Calu3 (cell line): ENCODE measurements at regions of chr21 and their contacts with region 1.

Region 1: DNA sequence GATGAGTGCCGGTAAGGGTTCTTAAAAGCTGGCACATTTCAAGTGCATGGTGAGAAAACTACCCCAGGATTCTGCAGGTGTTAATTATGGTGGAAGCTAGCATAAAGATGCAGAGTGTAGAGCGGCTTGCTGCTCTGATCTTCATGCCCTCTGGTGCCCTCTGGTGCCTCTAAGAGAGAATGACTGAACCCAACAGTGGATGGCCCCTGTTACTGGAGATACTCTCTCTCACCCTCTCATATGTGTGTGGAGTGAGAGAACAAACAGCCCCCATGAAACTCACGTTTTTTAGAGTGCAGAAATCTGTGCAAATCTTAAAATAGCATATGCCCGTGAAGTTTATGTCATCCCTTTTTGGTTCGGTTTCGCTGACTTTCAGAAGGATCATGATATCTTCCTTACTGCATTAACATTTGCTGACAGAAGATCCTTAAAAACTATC is 90.0 kb downstream of the GRIK1 start:
- DNase-seq: peak; percentile 48
- H3K4me3 Mint-ChIP-seq: no peak overlapping the region
- H3K27ac Mint-ChIP-seq: no peak overlapping the region
- H3K4me1 Mint-ChIP-seq: no peaks in the 10 kb centered on the region
- H3K27me3 Mint-ChIP-seq: no peaks in the 10 kb centered on the region
- CTCF ChIP-seq: peak; percentile 60

Region 2: DNA sequence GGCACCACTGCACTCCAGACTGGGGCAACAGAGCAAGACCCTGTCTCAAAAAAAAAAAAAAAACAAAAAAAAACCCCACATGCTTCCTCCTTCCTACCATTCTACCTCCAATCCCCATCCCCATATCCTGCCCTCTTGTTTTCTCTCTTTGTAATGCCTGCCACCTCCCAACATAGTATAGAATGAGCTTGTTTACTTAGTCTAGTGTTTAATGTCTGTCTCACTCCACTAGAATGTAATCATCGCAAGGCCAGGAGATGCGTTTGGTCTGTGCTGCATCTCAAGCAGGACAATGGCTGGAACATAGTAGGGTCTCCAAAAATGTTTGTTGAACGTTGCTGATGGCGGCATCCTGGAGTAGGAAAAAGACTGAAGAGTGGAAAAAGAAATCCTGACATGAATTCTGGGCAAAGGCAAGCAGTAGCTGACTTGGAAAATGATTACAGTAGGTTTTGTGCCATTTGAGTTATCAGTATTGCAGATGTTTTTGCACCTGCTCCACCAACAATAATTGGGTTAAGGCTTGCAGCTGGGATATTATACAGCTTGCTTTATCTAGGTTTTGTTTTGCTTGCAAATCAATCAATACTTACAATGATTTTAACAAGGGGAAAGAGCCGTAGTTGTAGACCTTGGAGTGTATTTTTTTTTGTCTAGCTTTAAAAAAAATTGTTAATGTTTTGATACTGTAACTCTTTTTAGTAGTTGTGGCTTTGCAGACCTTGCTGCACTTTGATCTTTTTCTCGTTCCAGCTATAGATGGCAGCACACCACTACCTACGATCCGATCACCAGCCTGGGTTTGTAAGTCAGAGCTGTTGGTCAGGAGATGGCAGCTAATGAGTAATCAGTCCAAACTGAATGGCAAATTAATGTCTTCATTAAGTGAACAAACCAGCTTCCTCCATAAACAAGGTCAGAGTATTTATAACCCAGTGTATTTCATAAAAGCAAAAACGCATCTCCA is 488.7 kb before region 1 on chr21:
- CTCF ChIA-PET with region 1: no interaction called
- intact Hi-C with region 1: loop called (anchors 10 kb)
- DNase-seq: peak; percentile 12
- H3K4me3 Mint-ChIP-seq: no peak overlapping the region
- H3K27ac Mint-ChIP-seq: no peak overlapping the region
- H3K4me1 Mint-ChIP-seq: no peaks in the 10 kb centered on the region
- H3K27me3 Mint-ChIP-seq: no peaks in the 10 kb centered on the region
- CTCF ChIP-seq: no peak

Region 3: GRCh38 chr21:29382006-29382654 is 467.6 kb before region 1 on chr21:
- CTCF ChIA-PET with region 1: no interaction called
- intact Hi-C with region 1: loop called (anchors 5 kb)
- DNase-seq: no peak
- H3K4me3 Mint-ChIP-seq: peak overlapping the region; percentile 8
- H3K27ac Mint-ChIP-seq: peak overlapping the region; percentile 22
- H3K4me1 Mint-ChIP-seq: peaks cover 17% of the 10 kb centered on the region
- H3K27me3 Mint-ChIP-seq: no peaks in the 10 kb centered on the region
- CTCF ChIP-seq: no peak

Region 4: GRCh38 chr21:29477941-29478340 is 371.8 kb before region 1 on chr21:
- CTCF ChIA-PET with region 1: interaction called, 3 read pairs
- intact Hi-C with region 1: loop called (anchors 1 kb)
- DNase-seq: no peak
- H3K4me3 Mint-ChIP-seq: no peak overlapping the region
- H3K27ac Mint-ChIP-seq: no peak overlapping the region
- H3K4me1 Mint-ChIP-seq: no peaks in the 10 kb centered on the region
- H3K27me3 Mint-ChIP-seq: no peaks in the 10 kb centered on the region
- CTCF ChIP-seq: no peak